ENCODE measurements at regions of chr17 and their contacts with region 1.

Region 1: GRCh38 chr17:35312790-35313711 is 60.4 kb downstream of the SLFN11 start:
- DNase-seq: peak in 35 of 42 donors; percentile 6 to 71 (median 36)

Region 2: GRCh38 chr17:35486920-35487732 is 174.1 kb after region 1 on chr17:
- intact Hi-C with region 1: no loop called
- DNase-seq: peak in 2 of 42 donors; percentile 3 to 22

Region 3: DNA sequence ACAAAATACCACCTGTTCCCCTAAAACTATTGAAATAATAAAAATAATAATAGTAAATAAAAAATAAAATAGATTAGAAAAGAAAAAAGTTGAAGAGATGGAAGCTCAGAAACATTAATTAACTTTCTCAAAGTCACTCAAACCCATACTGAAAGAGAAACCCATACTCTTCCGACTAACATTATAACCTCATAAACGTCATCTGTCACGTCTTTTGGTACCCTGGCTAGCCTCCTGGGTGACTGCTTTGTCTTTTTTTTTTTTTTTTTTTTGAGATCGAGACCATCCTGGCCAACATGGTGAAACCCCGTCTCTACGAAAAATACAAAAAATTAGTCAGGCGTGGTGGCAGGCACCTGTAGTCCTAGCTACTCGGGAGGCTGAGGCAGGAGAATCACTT is 216.8 kb after region 1 on chr17:
- intact Hi-C with region 1: loop called (anchors 5 kb)
- DNase-seq: no peak

Region 4: GRCh38 chr17:35747540-35748017 is 434.5 kb after region 1 on chr17:
- intact Hi-C with region 1: loop called (anchors 10 kb)
- DNase-seq: peak; percentile 63 to 93 (median 83)